K562 (cell line): ENCODE measurements at regions of chr2 and their contacts with region 1.

Region 1: GRCh38 chr2:241355983-241356870 is at the start of gene FARP2:
- DNase-seq: peak; percentile 82 to 95 (median 87)
- ATAC-seq: peak; percentile 90
- H3K4me3 ChIP-seq: peak within 1 kb of the TSS; percentile 75
- H3K27ac ChIP-seq: peak within 1 kb of the TSS; percentile 75
- H3K4me1 ChIP-seq: peaks cover 12 to 16% of the 10 kb centered on the region in 2 experiments; a peak in 4 of 5 replicates
- H3K27me3 ChIP-seq: no peaks in the 10 kb centered on the region
- CTCF ChIP-seq: no peak
- EP300 ChIP-seq: no peak
- POLR2A ChIP-seq: peak; percentile 67
- RAD21 ChIP-seq: no peak
- polyA plus RNA-seq, gene FARP2: 4.1 to 5.9 TPM

Region 2: GRCh38 chr2:241366678-241367077 is 10.5 kb after region 1 on chr2:
- CTCF ChIA-PET with region 1: no interaction called
- POLR2A ChIA-PET with region 1: interaction called, 7 read pairs
- in situ Hi-C with region 1: no loop called
- intact Hi-C with region 1: loop called (anchors 1 kb)
- DNase-seq: no peak
- ATAC-seq: no peak
- H3K4me3 ChIP-seq: no peak overlapping the region
- H3K27ac ChIP-seq: no peak overlapping the region
- H3K4me1 ChIP-seq: no peaks in the 10 kb centered on the region
- H3K27me3 ChIP-seq: no peaks in the 10 kb centered on the region
- CTCF ChIP-seq: no peak
- EP300 ChIP-seq: no peak
- POLR2A ChIP-seq: no peak
- RAD21 ChIP-seq: no peak

Region 3: DNA sequence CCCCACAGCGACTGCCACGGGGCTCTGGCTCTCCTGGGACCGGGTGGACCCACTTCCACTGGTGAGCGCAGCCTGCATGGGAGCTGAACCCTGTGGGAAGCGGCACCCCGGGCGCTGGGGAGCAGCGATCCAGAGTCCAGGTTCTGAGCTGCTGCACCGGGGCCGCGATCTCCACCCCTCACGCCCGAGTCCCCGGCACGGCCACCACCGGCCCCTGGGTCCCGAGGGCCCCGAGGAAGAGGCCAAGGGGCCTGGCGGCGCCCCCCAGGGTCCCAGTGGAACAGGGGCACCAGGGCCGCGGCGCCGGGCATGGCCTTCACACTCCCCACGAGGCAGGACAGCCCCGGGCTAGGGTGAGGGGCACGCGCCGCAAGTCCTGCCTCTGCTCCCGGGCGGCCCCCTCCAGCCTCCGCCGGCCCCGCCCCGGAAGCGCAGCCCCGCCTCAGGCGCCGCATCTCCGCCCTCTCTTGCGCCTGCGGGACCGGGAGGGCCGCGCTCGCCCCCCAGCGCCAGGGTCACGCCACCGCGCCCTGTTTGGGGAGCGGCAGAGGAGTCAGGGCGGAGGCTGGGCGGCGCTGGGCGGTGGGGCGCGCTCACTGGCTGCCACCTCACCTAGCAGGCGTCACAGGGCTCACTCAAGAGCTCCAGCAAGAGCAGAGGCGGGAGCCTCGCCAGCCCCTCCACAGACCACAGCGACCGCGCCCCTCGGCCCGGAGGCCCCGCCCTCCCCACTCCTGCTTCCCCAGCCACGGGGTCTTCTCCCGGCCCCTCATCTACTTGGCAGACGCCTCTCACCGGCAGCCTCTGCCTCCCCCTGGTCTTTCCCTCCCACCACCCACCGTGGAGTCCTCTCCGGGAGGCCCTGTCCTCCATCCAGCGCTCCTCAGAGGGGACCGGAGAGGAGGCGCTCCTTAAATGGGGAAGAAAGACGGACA is 253.9 kb after region 1 on chr2:
- CTCF ChIA-PET with region 1: no interaction called
- POLR2A ChIA-PET with region 1: no interaction called
- in situ Hi-C with region 1: no loop called
- intact Hi-C with region 1: loop called (anchors 2 kb)
- DNase-seq: peak; percentile 87 to 90 (median 90)
- ATAC-seq: peak; percentile 100
- H3K4me3 ChIP-seq: peak overlapping the region; percentile 51
- H3K27ac ChIP-seq: peak overlapping the region; percentile 74
- H3K4me1 ChIP-seq: peaks cover 0 to 23% of the 10 kb centered on the region in 2 experiments; a peak in 3 of 5 replicates
- H3K27me3 ChIP-seq: no peaks in the 10 kb centered on the region
- CTCF ChIP-seq: peak; percentile 61 to 88 (median 76)
- EP300 ChIP-seq: no peak
- POLR2A ChIP-seq: no peak; the same call in 1 of the 2 replicates
- RAD21 ChIP-seq: peak; percentile 62 to 63